Endothelial cell of umbilical vein (primary cell): ENCODE measurements at regions of chr1 and their contacts with region 1.

Region 1: GRCh38 chr1:16366722-16367257 is at the start of gene SZRD1:
- DNase-seq: peak; percentile 100
- H3K4me3 ChIP-seq: peak within 1 kb of the TSS; percentile 79 to 94 (median 88)
- H3K27ac ChIP-seq: peak within 1 kb of the TSS; percentile 85
- H3K4me1 ChIP-seq: peaks cover 21% of the 10 kb centered on the region
- H3K27me3 ChIP-seq: no peaks in the 10 kb centered on the region
- CTCF ChIP-seq: no peak
- POLR2A ChIP-seq: no peak
- total RNA-seq, gene SZRD1: 164 and 168 TPM in 2 replicates

Region 2: GRCh38 chr1:16078925-16079656 is 287.7 kb before region 1 on chr1:
- CTCF ChIA-PET with region 1: interaction called, 92 read pairs
- POLR2A ChIA-PET with region 1: interaction called, 6 read pairs
- dilution Hi-C with region 1: no loop called
- intact Hi-C with region 1: loop called (anchors 1 kb)
- DNase-seq: peak; percentile 76
- H3K4me3 ChIP-seq: no peak overlapping the region
- H3K27ac ChIP-seq: no peak overlapping the region
- H3K4me1 ChIP-seq: peaks cover 6% of the 10 kb centered on the region
- H3K27me3 ChIP-seq: no peaks in the 10 kb centered on the region
- CTCF ChIP-seq: peak; percentile 92 to 93
- POLR2A ChIP-seq: no peak

Region 3: DNA sequence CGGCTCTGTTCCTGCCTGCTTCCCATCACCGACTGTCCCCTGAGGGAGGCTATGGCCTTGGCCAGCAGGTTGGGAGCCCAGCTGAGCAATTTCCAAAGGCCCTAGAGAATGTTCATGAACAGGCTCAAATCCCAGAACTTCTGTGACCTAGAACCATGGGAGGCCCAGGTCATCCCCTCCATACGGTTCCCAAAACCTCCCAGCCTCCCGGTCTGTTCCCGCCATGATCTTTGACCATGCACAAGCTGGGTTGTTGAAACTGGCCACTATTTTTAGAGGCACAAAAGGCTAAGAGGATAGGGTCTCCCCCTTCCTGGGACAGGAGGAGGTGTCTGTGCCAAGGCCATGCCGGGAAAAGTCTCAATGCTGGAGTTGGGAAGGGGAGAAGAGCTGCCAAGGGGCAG is 238.4 kb before region 1 on chr1:
- CTCF ChIA-PET with region 1: no interaction called
- POLR2A ChIA-PET with region 1: no interaction called
- dilution Hi-C with region 1: no loop called
- intact Hi-C with region 1: no loop called
- DNase-seq: no peak
- H3K4me3 ChIP-seq: no peak overlapping the region
- H3K27ac ChIP-seq: no peak overlapping the region
- H3K4me1 ChIP-seq: no peaks in the 10 kb centered on the region
- H3K27me3 ChIP-seq: no peaks in the 10 kb centered on the region
- CTCF ChIP-seq: no peak
- POLR2A ChIP-seq: no peak

Region 4: GRCh38 chr1:16206547-16207317 is 160.1 kb before region 1 on chr1:
- CTCF ChIA-PET with region 1: interaction called, 29 read pairs
- POLR2A ChIA-PET with region 1: no interaction called
- dilution Hi-C with region 1: no loop called
- intact Hi-C with region 1: loop called (anchors 1 kb)
- DNase-seq: peak; percentile 98
- H3K4me3 ChIP-seq: peak overlapping the region; percentile 41 to 57 (median 50)
- H3K27ac ChIP-seq: peak overlapping the region; percentile 49
- H3K4me1 ChIP-seq: peaks cover 9% of the 10 kb centered on the region
- H3K27me3 ChIP-seq: no peaks in the 10 kb centered on the region
- CTCF ChIP-seq: no peak
- POLR2A ChIP-seq: peak; percentile 76

Region 5: DNA sequence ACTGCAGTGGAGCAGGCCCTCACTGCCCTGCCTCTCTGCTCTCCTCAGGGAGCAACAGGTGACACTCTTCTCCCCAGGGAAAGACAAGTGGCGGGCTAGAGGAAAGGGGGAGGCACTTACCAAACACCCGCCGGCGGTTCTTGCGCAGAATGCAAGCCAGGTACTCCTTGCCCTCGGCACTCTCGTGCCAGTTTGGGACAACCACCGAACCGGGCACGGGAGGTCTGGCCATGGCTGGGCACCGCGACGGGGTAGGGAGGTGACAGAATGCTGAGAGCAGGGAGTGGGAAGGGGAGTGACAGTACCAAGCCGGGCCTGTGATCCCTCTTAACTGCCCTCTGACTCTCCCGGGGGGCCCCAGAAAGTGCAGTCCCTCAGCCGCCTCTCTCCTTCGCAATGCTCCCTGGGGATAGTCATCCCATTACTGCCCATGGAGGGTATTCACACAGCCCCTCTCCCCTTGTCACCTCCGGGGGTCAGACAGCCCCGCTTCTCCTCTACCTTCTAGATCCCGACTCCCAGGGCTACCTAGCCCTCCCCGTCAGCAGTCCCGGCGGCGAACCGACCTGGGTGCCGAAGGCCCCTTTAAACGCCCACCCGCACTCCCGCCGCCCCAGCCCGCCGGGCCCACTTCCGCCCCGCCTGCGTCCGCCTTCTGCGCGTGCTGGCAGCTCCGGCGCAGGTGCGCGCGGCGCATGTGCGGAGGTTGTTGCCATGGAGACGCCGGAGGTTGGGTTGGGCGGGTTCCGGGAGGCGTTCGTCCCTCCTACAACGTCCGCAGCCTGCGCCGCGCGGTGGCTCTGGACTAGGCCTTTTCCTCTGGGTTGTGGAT is 130.1 kb before region 1 on chr1 and contains the start of gene CPLANE2:
- CTCF ChIA-PET with region 1: interaction called, 10 read pairs
- POLR2A ChIA-PET with region 1: no interaction called
- dilution Hi-C with region 1: no loop called
- intact Hi-C with region 1: no loop called
- DNase-seq: peak; percentile 89
- H3K4me3 ChIP-seq: peak within 1 kb of the TSS; percentile 2 to 53 (median 47)
- H3K27ac ChIP-seq: peak within 1 kb of the TSS; percentile 63
- H3K4me1 ChIP-seq: peaks cover 15% of the 10 kb centered on the region
- H3K27me3 ChIP-seq: no peaks in the 10 kb centered on the region
- CTCF ChIP-seq: no peak
- POLR2A ChIP-seq: peak; percentile 73
- total RNA-seq, gene CPLANE2: 3.7 and 3.9 TPM in 2 replicates

Region 6: GRCh38 chr1:16289963-16290362 is 76.8 kb before region 1 on chr1:
- CTCF ChIA-PET with region 1: interaction called, 17 read pairs
- POLR2A ChIA-PET with region 1: no interaction called
- dilution Hi-C with region 1: no loop called
- intact Hi-C with region 1: no loop called
- DNase-seq: no peak
- H3K4me3 ChIP-seq: no peak overlapping the region
- H3K27ac ChIP-seq: no peak overlapping the region
- H3K4me1 ChIP-seq: peaks cover 6% of the 10 kb centered on the region
- H3K27me3 ChIP-seq: no peaks in the 10 kb centered on the region
- CTCF ChIP-seq: no peak
- POLR2A ChIP-seq: no peak

Region 7: DNA sequence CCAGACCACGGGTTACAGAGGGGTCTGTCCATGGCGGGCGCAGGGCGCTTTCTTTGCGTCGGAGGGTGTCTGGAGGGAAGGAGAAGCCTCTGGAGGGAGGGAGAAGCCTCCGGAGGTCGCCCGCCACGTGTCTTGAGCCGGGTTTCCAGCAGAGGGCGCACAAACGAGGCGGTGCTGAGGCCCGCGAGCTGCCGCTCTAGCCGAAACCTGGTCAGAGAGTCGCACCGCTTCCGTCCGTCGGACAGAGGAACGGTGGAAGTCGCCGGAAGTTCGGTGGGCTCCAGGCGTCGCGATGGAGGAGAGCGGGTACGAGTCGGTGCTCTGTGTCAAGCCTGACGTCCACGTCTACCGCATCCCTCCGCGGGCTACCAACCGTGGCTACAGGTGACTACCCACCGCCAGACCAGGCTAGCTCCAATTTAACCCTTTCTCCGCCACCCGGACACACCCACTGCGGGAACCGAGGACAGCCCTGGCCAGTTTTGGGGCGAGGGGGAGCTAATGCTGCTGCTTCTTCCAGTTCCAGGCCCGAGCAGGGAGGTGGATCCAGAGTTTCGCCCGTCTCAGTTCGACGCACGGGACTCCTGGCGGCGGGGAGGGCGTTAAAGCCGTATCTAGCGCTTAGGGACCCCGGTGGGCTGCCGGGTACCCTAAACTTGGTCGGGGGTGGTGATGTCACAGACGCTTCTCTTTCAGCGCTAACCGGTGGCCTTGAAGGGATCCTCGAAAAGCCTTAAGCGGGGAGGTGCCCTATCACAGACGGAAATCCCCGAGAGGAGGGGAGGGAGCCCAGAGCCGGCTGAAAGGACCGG is 73.9 kb after region 1 on chr1 and contains the start of gene NECAP2:
- CTCF ChIA-PET with region 1: interaction called, 24 read pairs
- POLR2A ChIA-PET with region 1: no interaction called
- dilution Hi-C with region 1: no loop called
- intact Hi-C with region 1: loop called (anchors 1 kb)
- DNase-seq: peak; percentile 93
- H3K4me3 ChIP-seq: peak within 1 kb of the TSS; percentile 59 to 95 (median 92)
- H3K27ac ChIP-seq: peak within 1 kb of the TSS; percentile 29
- H3K4me1 ChIP-seq: peaks cover 12% of the 10 kb centered on the region
- H3K27me3 ChIP-seq: no peaks in the 10 kb centered on the region
- CTCF ChIP-seq: peak; percentile 95 to 97
- POLR2A ChIP-seq: peak; percentile 96
- total RNA-seq, gene NECAP2: 101 and 107 TPM in 2 replicates

Region 8: GRCh38 chr1:16717336-16718098 is 350.7 kb after region 1 on chr1:
- CTCF ChIA-PET with region 1: no interaction called
- POLR2A ChIA-PET with region 1: no interaction called
- dilution Hi-C with region 1: no loop called
- intact Hi-C with region 1: no loop called
- DNase-seq: peak; percentile 7
- H3K4me3 ChIP-seq: no peak overlapping the region
- H3K27ac ChIP-seq: no peak overlapping the region
- H3K4me1 ChIP-seq: no peaks in the 10 kb centered on the region
- H3K27me3 ChIP-seq: peaks cover 0 to 7% of the 10 kb centered on the region in 2 experiments
- CTCF ChIP-seq: no peak
- POLR2A ChIP-seq: no peak